CD8-positive, alpha-beta T cell (primary cell): ENCODE measurements at regions of chr1 and their contacts with region 1.

Region 1: GRCh38 chr1:160837558-160838205 is 25.0 kb downstream of the CD244 start:
- DNase-seq: peak; percentile 70 to 96 (median 88)
- ATAC-seq: peak; percentile 91
- H3K4me3 ChIP-seq: peak overlapping the region; percentile 17 to 34
- H3K4me3 Mint-ChIP-seq: peak overlapping the region; percentile 84
- H3K27ac ChIP-seq: peak overlapping the region; percentile 54 to 77
- H3K27ac Mint-ChIP-seq: peak overlapping the region; percentile 96
- H3K4me1 ChIP-seq: peaks cover 85% of the 10 kb centered on the region
- H3K4me1 Mint-ChIP-seq: peaks cover 84% of the 10 kb centered on the region
- H3K27me3 ChIP-seq: no peaks in the 10 kb centered on the region
- H3K27me3 Mint-ChIP-seq: no peaks in the 10 kb centered on the region
- CTCF ChIP-seq: peak; percentile 27

Region 2: DNA sequence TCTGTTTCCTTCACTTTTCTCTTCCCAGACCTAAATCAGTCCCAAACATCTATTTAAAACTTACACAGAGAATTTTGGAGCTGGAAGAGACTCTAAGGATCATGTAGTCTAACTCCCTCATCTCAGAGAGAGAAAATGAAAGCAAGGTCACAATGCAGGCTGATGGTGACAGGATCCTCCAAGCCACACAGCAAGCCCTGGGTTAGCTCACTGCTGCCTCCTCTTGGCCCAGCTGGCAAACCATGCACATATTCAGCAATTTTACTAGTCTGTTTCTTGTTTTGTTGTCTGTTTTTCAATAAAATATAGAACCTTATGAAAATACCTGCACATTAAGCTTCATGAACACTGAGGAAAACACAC is 69.4 kb before region 1 on chr1:
- CTCF ChIA-PET with region 1: interaction called, 49 read pairs
- POLR2A ChIA-PET with region 1: interaction called, 3 read pairs
- intact Hi-C with region 1: no loop called
- DNase-seq: peak; percentile 72 to 94 (median 85)
- ATAC-seq: peak; percentile 92
- H3K4me3 ChIP-seq: peak overlapping the region; percentile 31 to 41
- H3K4me3 Mint-ChIP-seq: peak overlapping the region; percentile 82
- H3K27ac ChIP-seq: peak overlapping the region; percentile 33 to 85
- H3K27ac Mint-ChIP-seq: peak overlapping the region; percentile 96
- H3K4me1 ChIP-seq: peaks cover 18% of the 10 kb centered on the region
- H3K4me1 Mint-ChIP-seq: peaks cover 20% of the 10 kb centered on the region
- H3K27me3 ChIP-seq: no peaks in the 10 kb centered on the region
- H3K27me3 Mint-ChIP-seq: no peaks in the 10 kb centered on the region
- CTCF ChIP-seq: peak; percentile 92

Region 3: DNA sequence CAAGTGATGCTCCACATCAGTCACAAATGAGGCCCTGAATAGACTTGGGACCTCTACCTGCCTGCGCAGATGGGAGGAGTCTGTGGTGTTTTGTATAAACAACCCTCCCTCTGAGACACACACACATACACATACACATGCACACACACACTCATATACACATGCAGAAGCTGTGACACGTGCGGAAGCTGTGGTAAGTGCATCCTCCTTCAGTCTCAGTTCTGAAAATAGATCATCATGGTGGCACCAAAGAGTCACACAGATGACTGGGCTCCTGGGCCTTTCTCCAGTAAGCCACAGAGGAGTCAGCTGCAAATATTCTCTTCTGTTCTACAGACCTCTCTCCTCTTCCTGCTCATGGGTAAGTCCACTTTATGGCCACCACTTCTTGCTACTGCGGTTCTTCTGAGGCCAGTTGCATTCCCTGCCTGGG is 41.7 kb before region 1 on chr1 and contains the start of gene LY9:
- CTCF ChIA-PET with region 1: interaction called, 69 read pairs
- POLR2A ChIA-PET with region 1: interaction called, 17 read pairs
- intact Hi-C with region 1: loop called (anchors 2 to 5 kb)
- DNase-seq: peak; percentile 65 to 97 (median 77)
- ATAC-seq: peak; percentile 90
- H3K4me3 ChIP-seq: peak within 1 kb of the TSS; percentile 71 to 74
- H3K4me3 Mint-ChIP-seq: peak within 1 kb of the TSS; percentile 97
- H3K27ac ChIP-seq: peak within 1 kb of the TSS; percentile 75 to 85
- H3K27ac Mint-ChIP-seq: peak within 1 kb of the TSS; percentile 99
- H3K4me1 ChIP-seq: peaks cover 30% of the 10 kb centered on the region
- H3K4me1 Mint-ChIP-seq: peaks cover 54% of the 10 kb centered on the region
- H3K27me3 ChIP-seq: no peaks in the 10 kb centered on the region
- H3K27me3 Mint-ChIP-seq: no peaks in the 10 kb centered on the region
- CTCF ChIP-seq: no peak
- total RNA-seq, gene LY9: 103 to 104 TPM

Region 4: DNA sequence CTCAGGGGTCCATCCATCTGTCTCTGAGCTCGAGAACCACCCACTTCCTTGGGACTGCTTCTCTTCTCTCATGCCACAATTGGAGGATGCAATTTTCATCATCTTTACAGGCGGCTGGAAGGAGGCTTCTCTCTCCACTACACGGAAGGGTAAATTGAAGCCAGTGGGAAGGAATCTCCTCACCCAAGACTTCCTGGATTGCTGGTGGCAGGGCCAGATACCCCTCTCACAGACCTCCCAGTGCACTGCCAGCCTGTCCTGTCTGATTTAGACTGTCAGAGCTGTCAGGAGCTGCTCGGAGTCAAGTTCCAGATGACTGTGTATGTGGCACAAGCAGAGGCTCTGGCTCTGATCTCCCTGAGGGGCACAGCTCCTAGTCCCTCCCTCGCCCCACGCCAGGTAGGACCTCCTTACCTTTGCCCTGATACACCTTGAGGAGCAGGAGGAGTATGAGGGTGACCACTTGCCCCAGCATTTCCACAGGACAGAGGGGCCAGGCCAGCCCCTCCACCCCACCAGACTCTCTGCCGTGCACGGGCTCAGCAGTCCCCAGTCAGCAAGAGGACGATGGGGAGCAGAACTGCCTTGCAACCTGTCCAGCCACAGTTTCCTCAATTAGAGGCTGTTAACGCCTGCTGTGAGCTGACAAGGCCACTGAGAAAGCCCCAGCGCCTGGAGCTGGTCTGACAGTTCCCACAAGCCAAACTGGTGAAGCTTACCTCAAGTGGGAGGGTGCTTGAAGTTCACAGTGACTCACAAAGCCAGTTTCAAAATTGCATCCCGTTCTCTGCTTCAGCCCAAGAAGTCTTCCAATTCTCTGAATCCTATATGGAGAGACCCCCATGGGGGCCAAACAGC is 24.8 kb after region 1 on chr1 and contains the start of gene CD244:
- CTCF ChIA-PET with region 1: interaction called, 24 read pairs
- POLR2A ChIA-PET with region 1: interaction called, 5 read pairs
- intact Hi-C with region 1: loop called in 1 of 2 experiments (anchors 2 kb)
- DNase-seq: peak; percentile 25 to 89 (median 50)
- ATAC-seq: peak; percentile 88
- H3K4me3 ChIP-seq: peak within 1 kb of the TSS; percentile 14 to 68
- H3K4me3 Mint-ChIP-seq: peak within 1 kb of the TSS; percentile 79
- H3K27ac ChIP-seq: peak within 1 kb of the TSS; percentile 11 to 73
- H3K27ac Mint-ChIP-seq: peak within 1 kb of the TSS; percentile 88
- H3K4me1 ChIP-seq: peaks cover 20% of the 10 kb centered on the region
- H3K4me1 Mint-ChIP-seq: peaks cover 40% of the 10 kb centered on the region
- H3K27me3 ChIP-seq: no peaks in the 10 kb centered on the region
- H3K27me3 Mint-ChIP-seq: no peaks in the 10 kb centered on the region
- CTCF ChIP-seq: no peak
- total RNA-seq, gene CD244: 2.1 to 2.6 TPM

Region 5: DNA sequence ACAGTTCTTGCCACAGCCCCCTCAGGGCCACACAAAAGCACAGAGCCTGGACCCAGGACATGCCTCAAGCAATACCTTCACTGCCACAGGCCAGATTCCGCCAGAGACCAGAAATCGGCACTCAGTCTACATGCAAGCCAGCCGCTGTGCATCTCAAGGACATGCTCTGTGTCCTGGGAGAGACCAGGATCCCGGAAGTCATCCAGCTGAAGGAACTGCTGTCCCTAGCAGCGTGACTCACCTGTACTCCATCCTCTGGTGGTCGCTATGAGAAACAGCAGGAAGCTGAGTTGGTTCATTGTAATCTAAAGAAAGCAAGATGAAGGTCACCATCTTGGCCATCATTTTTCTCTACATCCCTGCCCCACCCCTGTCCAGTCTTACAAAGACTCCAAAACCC is 46.9 kb after region 1 on chr1:
- CTCF ChIA-PET with region 1: interaction called, 224 read pairs
- POLR2A ChIA-PET with region 1: interaction called, 10 read pairs
- intact Hi-C with region 1: no loop called
- DNase-seq: peak in 2 of 9 experiments; percentile 29 to 59
- ATAC-seq: no peak
- H3K4me3 ChIP-seq: no peak overlapping the region
- H3K4me3 Mint-ChIP-seq: no peak overlapping the region
- H3K27ac ChIP-seq: no peak overlapping the region
- H3K27ac Mint-ChIP-seq: no peak overlapping the region
- H3K4me1 ChIP-seq: no peaks in the 10 kb centered on the region
- H3K4me1 Mint-ChIP-seq: peaks cover 1% of the 10 kb centered on the region
- H3K27me3 ChIP-seq: no peaks in the 10 kb centered on the region
- H3K27me3 Mint-ChIP-seq: peaks cover 4% of the 10 kb centered on the region
- CTCF ChIP-seq: peak; percentile 35